Endothelial cell of umbilical vein (primary cell): ENCODE measurements at regions of chr9 and their contacts with region 1.

Region 1: GRCh38 chr9:14400658-14400995 is 86.7 kb upstream of the NFIB start:
- DNase-seq: peak; percentile 90
- H3K4me3 ChIP-seq: no peak overlapping the region
- H3K27ac ChIP-seq: peak overlapping the region; percentile 80
- H3K4me1 ChIP-seq: peaks cover 16% of the 10 kb centered on the region
- H3K27me3 ChIP-seq: no peaks in the 10 kb centered on the region
- CTCF ChIP-seq: peak; percentile 58
- POLR2A ChIP-seq: no peak

Region 2: DNA sequence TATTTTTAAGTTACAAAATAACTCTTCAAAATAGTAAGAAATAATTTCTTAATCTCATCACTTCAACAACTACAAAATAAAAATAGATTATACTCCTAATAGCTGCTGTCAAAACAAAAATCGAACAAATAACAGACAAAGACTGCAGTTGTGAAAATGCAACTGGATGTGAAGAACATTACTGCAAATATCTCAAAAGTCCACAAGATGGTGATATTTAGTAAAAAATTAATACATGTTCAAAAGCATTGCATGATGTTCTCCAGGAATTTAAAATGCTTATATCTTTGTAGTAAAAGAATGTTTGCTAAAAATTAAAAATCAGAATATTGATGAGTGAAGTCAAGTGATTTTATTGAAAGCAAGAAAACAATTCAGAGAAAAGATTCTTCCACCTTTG is 1187.3 kb before region 1 on chr9:
- CTCF ChIA-PET with region 1: no interaction called
- POLR2A ChIA-PET with region 1: no interaction called
- dilution Hi-C with region 1: no loop called
- intact Hi-C with region 1: loop called (anchors 10 kb)
- DNase-seq: peak; percentile 44
- H3K4me3 ChIP-seq: no peak overlapping the region
- H3K27ac ChIP-seq: no peak overlapping the region
- H3K4me1 ChIP-seq: peaks cover 27% of the 10 kb centered on the region
- H3K27me3 ChIP-seq: no peaks in the 10 kb centered on the region
- CTCF ChIP-seq: peak in 1 of 2 donors; percentile 22
- POLR2A ChIP-seq: no peak

Region 3: DNA sequence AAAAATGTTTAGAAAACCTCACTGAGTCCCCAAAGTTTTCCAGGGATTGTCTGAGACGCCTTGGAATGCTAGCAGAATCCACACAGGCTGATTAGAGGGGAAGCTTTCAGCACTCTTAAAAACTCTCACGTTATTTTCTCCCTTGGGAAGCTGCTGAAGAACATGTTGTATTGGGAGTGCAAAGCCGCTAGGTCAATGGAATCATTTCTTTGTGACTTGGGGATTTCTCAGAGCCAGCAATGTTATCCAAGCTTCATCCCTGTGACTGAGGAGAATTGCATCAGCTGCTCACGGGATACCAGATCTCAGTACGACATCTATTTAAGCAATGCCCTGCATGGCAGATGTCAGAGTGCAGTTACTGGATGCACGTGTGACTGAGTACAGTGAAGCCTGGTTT is 694.7 kb before region 1 on chr9:
- CTCF ChIA-PET with region 1: no interaction called
- POLR2A ChIA-PET with region 1: no interaction called
- dilution Hi-C with region 1: no loop called
- intact Hi-C with region 1: loop called (anchors 5 kb)
- DNase-seq: peak; percentile 81
- H3K4me3 ChIP-seq: no peak overlapping the region
- H3K27ac ChIP-seq: peak overlapping the region; percentile 80
- H3K4me1 ChIP-seq: peaks cover 39% of the 10 kb centered on the region
- H3K27me3 ChIP-seq: no peaks in the 10 kb centered on the region
- CTCF ChIP-seq: no peak
- POLR2A ChIP-seq: no peak

Region 4: GRCh38 chr9:14271093-14271673 is 129.4 kb before region 1 on chr9:
- CTCF ChIA-PET with region 1: no interaction called
- POLR2A ChIA-PET with region 1: no interaction called
- dilution Hi-C with region 1: no loop called
- intact Hi-C with region 1: loop called (anchors 2 kb)
- DNase-seq: peak; percentile 95
- H3K4me3 ChIP-seq: peak overlapping the region in 1 of 3 experiments; percentile 33
- H3K27ac ChIP-seq: peak overlapping the region; percentile 46
- H3K4me1 ChIP-seq: peaks cover 64% of the 10 kb centered on the region
- H3K27me3 ChIP-seq: no peaks in the 10 kb centered on the region
- CTCF ChIP-seq: no peak
- POLR2A ChIP-seq: no peak

Region 5: DNA sequence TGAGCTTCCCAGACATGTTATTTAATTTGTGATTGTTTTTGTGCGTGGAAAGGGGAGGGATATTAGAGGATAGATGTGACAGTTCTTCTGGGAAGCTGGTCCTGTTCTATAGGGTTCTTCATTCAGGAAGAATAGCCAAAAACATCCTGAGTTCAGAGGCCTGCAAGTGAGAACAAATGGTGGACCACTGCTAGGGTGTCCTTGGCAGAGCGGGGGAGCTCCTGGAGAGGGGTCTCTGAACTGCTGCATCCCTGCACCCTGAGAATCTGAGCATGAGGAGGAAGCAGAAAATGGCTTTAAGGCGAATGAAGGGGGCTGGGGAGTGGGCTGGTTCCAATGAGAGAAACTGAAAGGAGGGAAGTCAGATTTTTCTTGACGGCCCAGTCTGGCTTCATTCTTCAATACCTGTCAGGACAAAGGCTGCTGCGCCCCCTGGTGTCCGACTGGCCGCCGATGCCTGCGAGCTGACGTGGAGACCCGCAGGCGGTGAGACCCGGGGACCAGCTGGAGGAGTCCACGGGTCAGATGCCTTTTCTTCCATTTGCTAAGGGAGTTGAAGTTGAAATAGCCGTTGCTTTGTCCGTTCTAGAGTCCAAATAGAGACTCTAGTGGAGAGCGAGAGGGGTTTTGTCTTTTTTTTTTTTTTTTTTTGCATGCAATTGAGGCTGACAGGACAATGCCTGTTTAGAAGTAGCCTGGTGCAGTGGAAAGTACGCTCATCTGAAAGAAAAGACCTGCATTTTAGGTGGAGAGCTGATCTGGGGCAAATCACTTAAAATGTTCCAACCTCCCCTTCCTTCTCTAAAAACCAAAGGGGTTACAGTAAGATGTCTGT is 47.2 kb before region 1 on chr9:
- CTCF ChIA-PET with region 1: interaction called, 45 read pairs
- POLR2A ChIA-PET with region 1: interaction called, 3 read pairs
- dilution Hi-C with region 1: no loop called
- intact Hi-C with region 1: loop called (anchors 1 kb)
- DNase-seq: peak; percentile 89
- H3K4me3 ChIP-seq: no peak overlapping the region
- H3K27ac ChIP-seq: peak overlapping the region; percentile 2
- H3K4me1 ChIP-seq: peaks cover 45% of the 10 kb centered on the region
- H3K27me3 ChIP-seq: no peaks in the 10 kb centered on the region
- CTCF ChIP-seq: peak; percentile 95 to 97
- POLR2A ChIP-seq: no peak

Region 6: DNA sequence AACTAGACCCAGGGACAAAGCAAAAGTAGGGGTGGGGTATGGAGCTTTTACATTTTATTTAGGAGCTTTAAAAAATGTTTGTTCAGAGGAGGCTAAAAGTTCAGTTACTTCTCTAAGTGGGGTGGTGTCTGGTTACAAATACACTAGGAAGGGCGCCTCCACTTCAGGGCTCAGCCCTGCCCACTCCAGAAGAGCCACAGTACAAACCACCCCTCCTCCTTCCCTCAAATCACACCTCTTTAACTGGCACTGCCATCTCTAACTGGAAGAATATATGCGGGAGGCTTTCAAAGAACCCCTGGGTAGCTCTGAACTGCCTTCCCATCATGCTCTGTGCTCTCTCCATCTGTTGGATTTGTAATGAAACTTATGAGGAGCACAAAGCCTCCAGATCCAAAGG is 12.1 kb after region 1 on chr9:
- CTCF ChIA-PET with region 1: interaction called, 15 read pairs
- POLR2A ChIA-PET with region 1: no interaction called
- dilution Hi-C with region 1: no loop called
- intact Hi-C with region 1: no loop called
- DNase-seq: no peak
- H3K4me3 ChIP-seq: no peak overlapping the region
- H3K27ac ChIP-seq: no peak overlapping the region
- H3K4me1 ChIP-seq: no peaks in the 10 kb centered on the region
- H3K27me3 ChIP-seq: no peaks in the 10 kb centered on the region
- CTCF ChIP-seq: no peak
- POLR2A ChIP-seq: no peak